Caco-2 (cell line): ENCODE measurements at regions of chr5 and their contacts with region 1.

Region 1: GRCh38 chr5:44089424-44090144 is 299.6 kb downstream of the FGF10 start:
- DNase-seq: no peak
- H3K4me3 ChIP-seq: no peak overlapping the region
- H3K4me3 Mint-ChIP-seq: no peak overlapping the region
- H3K27ac Mint-ChIP-seq: no peak overlapping the region
- H3K4me1 ChIP-seq: no peaks in the 10 kb centered on the region
- H3K4me1 Mint-ChIP-seq: no peaks in the 10 kb centered on the region
- H3K27me3 ChIP-seq: no peaks in the 10 kb centered on the region
- H3K27me3 Mint-ChIP-seq: no peaks in the 10 kb centered on the region
- CTCF ChIP-seq: no peak

Region 2: DNA sequence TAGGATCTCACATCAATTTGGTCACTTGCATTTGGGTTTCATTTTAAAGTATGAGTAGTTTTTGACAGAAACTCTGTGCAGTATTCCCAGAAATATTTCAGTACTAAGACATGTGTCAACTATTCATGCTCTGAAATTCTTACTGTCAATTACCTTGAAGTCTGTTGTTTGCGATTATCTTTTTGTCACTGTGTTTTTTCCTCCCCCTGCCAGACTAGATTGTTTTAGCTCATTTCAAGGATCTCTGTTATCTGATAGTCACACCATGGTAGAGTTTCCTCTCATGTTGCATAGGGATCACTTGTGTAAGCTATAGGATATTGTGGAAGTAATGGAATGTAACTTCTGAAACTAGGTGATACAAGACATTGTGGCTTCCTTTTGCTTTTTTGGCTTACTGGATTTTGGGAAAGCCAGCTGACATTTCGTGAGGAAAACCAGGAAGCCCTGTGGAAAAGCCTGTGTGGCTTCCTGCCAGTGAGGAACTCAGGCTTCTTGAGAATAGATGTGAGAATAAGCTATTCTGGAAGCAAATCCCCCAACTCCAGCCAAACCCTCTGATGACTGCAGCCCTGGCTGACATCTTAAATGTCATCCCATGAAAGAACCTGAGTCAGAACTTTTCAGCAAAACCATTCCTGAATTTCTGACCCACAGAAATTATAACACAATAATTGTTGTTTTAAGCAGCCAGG is 177.4 kb after region 1 on chr5:
- CTCF ChIA-PET with region 1: no interaction called
- POLR2A ChIA-PET with region 1: no interaction called
- intact Hi-C with region 1: loop called (anchors 10 kb)
- DNase-seq: no peak
- H3K4me3 ChIP-seq: no peak overlapping the region
- H3K4me3 Mint-ChIP-seq: no peak overlapping the region
- H3K27ac Mint-ChIP-seq: no peak overlapping the region
- H3K4me1 ChIP-seq: no peaks in the 10 kb centered on the region
- H3K4me1 Mint-ChIP-seq: no peaks in the 10 kb centered on the region
- H3K27me3 ChIP-seq: no peaks in the 10 kb centered on the region
- H3K27me3 Mint-ChIP-seq: peaks cover 6% of the 10 kb centered on the region
- CTCF ChIP-seq: no peak